H1 (cell line): ENCODE measurements at regions of chr2 and their contacts with region 1.

Region 1: GRCh38 chr2:217864963-217865772 is 137.6 kb downstream of the TNS1 start:
- DNase-seq: no peak
- H3K4me3 ChIP-seq: no peak overlapping the region
- H3K27ac ChIP-seq: no peak overlapping the region
- H3K4me1 ChIP-seq: peaks cover 0 to 6% (median 0%) of the 10 kb centered on the region in 4 experiments; a peak in 2 of 7 replicates
- H3K27me3 ChIP-seq: no peaks in the 10 kb centered on the region
- CTCF ChIP-seq: no peak
- EP300 ChIP-seq: no peak
- POLR2A ChIP-seq: no peak
- RAD21 ChIP-seq: no peak

Region 2: GRCh38 chr2:217804786-217805667 is 60.1 kb before region 1 on chr2:
- CTCF ChIA-PET with region 1: interaction called, 10 read pairs
- POLR2A ChIA-PET with region 1: no interaction called
- DNase-seq: no peak
- H3K4me3 ChIP-seq: no peak overlapping the region
- H3K27ac ChIP-seq: no peak overlapping the region
- H3K4me1 ChIP-seq: peaks cover 0 to 5% (median 0%) of the 10 kb centered on the region in 4 experiments; a peak in 1 of 7 replicates
- H3K27me3 ChIP-seq: no peaks in the 10 kb centered on the region
- CTCF ChIP-seq: no peak
- EP300 ChIP-seq: no peak
- POLR2A ChIP-seq: no peak
- RAD21 ChIP-seq: no peak

Region 3: GRCh38 chr2:217880287-217880889 is 15.2 kb after region 1 on chr2:
- CTCF ChIA-PET with region 1: interaction called, 40 read pairs
- POLR2A ChIA-PET with region 1: interaction called, 7 read pairs
- DNase-seq: no peak
- H3K4me3 ChIP-seq: no peak overlapping the region
- H3K27ac ChIP-seq: no peak overlapping the region
- H3K4me1 ChIP-seq: peaks cover 0 to 9% (median under 1%) of the 10 kb centered on the region in 4 experiments; a peak in 4 of 7 replicates
- H3K27me3 ChIP-seq: no peaks in the 10 kb centered on the region
- CTCF ChIP-seq: peak in 1 of 3 experiments; percentile 18; a peak in 1 of 4 replicates
- EP300 ChIP-seq: no peak
- POLR2A ChIP-seq: no peak
- RAD21 ChIP-seq: no peak

Region 4: DNA sequence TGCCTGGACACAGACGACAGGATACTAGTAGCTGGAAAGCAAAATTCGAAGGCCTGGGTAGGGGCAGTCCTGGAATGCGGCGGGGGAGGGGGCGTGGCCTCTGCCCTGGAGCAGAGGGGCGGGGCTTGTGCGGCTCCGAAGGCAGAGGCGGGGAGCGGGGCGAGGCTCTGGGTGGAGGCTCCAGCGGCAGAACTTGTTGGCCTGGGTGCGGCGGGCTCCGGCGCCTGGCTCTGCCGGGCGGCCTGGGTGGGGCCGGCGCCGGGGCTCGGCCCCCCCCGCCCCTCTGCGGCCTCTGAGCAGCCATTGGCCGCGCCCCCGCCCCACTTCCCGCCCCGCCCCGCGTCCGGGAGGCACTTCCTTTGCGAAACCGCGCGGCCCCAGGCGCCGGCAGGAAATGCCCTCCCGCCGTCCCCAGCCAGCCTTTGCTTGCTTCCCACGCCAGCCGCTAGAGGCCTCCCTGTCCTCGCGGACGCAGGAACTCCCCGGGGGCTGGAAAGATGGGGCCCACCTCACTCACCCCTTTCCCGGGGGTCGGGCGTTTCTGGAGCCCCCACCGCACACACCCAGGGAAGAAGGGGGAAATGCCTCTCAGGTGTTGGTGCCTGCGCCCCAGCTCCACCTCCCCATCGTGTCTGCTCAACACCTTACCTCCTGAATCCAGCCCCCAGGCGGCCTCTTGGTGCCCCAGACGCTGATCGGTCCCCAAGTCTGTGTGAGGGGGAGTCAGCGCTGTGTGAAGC is 541.2 kb after region 1 on chr2:
- CTCF ChIA-PET with region 1: no interaction called
- POLR2A ChIA-PET with region 1: no interaction called
- DNase-seq: peak; percentile 85 to 98
- H3K4me3 ChIP-seq: peak overlapping the region; percentile 45 to 75 (median 62)
- H3K27ac ChIP-seq: peak overlapping the region; percentile 82; the same call in 1 of the 2 replicates
- H3K4me1 ChIP-seq: peaks cover 12 to 25% (median 19%) of the 10 kb centered on the region in 4 experiments
- H3K27me3 ChIP-seq: no peaks in the 10 kb centered on the region
- CTCF ChIP-seq: peak in 2 of 3 experiments; percentile 73 to 78; a peak in 3 of 4 replicates
- EP300 ChIP-seq: no peak
- POLR2A ChIP-seq: no peak
- RAD21 ChIP-seq: peak; percentile 80